PC-9 (cell line): ENCODE measurements at regions of chr16 and their contacts with region 1.

Region 1: GRCh38 chr16:71288890-71289733 is at the start of gene CMTR2:
- DNase-seq: peak; percentile 95 to 97
- H3K4me3 ChIP-seq: peak within 1 kb of the TSS; percentile 67
- H3K27ac ChIP-seq: peak within 1 kb of the TSS; percentile 93
- H3K4me1 ChIP-seq: peaks cover 35% of the 10 kb centered on the region
- H3K27me3 ChIP-seq: no peaks in the 10 kb centered on the region
- CTCF ChIP-seq: no peak
- total RNA-seq, gene CMTR2: 30.4 and 36.2 TPM in 2 replicates

Region 2: DNA sequence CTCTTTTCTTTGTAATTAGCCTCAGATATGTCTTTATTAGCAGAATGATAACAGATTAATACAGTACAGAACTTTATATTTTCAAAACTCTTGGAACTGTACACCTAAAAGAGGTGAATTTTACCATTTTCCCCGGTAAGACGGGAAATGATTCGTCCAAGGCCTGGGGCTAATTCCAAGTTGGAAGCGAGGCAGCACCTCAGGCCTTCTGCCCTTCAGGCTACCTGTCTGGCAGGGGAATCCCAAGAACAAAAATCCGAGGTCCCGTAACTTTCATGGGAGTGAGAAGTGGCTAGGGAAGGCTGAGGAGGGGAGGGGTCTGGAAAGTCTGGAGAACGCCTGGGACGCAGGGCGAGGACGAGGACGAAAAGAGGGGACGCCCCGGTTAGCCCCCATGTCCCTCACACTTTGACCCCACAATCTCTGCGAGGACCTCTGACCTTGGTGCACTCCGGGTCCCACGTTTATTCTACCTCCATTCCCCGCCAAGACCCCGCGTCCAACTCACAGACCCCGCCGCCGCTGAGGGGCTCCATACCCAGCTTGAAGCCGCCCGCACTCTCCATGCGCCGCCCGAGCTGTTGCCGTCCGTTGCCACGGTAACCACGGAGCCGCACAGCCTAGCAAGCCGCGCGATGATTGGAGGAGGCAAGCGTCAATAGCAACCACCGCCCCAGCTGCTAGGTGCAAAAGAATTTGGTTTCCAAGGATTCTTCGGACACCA is 58.8 kb before region 1 on chr16 and contains the start of gene HYDIN:
- CTCF ChIA-PET with region 1: no interaction called
- POLR2A ChIA-PET with region 1: interaction called, 3 read pairs
- intact Hi-C with region 1: loop called (anchors 5 kb)
- DNase-seq: peak; percentile 83 to 90
- H3K4me3 ChIP-seq: peak within 1 kb of the TSS; percentile 81
- H3K27ac ChIP-seq: no peak within 1 kb of the TSS
- H3K4me1 ChIP-seq: peaks cover 6% of the 10 kb centered on the region
- H3K27me3 ChIP-seq: no peaks in the 10 kb centered on the region
- CTCF ChIP-seq: no peak
- total RNA-seq, gene HYDIN: 25.9 and 31.0 TPM in 2 replicates

Region 3: DNA sequence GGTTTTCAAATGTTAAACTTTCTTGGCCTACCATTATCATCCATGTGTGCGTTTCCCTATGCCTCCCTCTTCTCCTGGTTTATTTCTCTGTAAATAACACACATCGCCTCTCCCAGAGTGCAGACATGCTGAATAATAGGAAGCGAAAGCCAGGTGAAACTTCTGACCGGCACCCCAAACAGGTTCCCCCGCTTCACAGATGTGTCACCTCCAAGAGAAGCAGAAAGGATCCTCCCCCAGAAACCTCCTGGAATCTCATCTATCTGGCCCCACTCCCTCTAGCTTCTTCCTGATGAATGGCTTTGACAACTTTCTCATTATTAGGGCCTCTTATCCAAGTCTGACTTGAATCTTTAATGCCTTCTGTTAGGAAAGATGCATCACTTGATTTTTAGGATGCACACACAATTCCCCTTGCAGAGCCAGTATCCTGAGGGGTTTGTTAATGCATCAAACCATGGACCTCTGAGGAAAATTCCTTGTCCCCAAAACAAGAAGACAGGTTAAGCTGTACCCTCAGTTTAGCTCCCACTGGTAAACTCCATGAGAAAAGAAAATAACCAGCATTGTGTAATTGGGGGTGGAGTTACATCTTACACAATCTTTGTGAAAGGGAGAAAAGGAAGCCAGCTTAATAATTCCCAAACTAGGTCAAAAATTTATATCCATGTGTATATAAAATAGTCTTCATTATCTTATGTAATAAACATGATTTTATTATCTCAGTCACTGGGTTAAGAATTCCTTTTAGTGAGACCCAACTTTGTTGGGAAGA is 38.5 kb before region 1 on chr16:
- CTCF ChIA-PET with region 1: no interaction called
- POLR2A ChIA-PET with region 1: no interaction called
- intact Hi-C with region 1: loop called (anchors 2 kb)
- DNase-seq: peak; percentile 76 to 88
- H3K4me3 ChIP-seq: no peak overlapping the region; the same call in 1 of the 2 replicates
- H3K27ac ChIP-seq: peak overlapping the region; percentile 79
- H3K4me1 ChIP-seq: peaks cover 23% of the 10 kb centered on the region
- H3K27me3 ChIP-seq: no peaks in the 10 kb centered on the region
- CTCF ChIP-seq: 0 out of 2 replicates have a peak, but pooled peaks have one; percentile 32

Region 4: DNA sequence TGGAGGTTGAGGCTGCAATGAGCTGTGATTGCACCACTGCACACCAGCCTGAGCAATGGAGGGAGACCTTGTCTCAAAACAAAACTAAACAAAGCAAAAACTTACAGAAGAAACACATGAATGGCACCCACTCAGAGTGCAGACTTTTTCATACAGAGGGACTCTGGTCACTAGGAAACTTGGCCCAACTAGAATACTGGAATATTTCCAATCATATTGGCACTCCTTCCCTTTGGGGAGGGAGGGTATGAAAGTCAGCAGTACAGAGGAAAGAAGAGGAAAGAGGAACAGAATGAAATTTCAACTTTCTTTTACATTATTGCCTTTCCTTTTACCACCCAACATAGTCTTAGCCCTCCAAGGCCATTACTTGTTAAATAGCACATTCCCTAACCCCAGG is 28.1 kb before region 1 on chr16:
- CTCF ChIA-PET with region 1: no interaction called
- POLR2A ChIA-PET with region 1: no interaction called
- intact Hi-C with region 1: no loop called
- DNase-seq: no peak
- H3K4me3 ChIP-seq: no peak overlapping the region
- H3K27ac ChIP-seq: no peak overlapping the region
- H3K4me1 ChIP-seq: no peaks in the 10 kb centered on the region
- H3K27me3 ChIP-seq: no peaks in the 10 kb centered on the region
- CTCF ChIP-seq: no peak

Region 5: DNA sequence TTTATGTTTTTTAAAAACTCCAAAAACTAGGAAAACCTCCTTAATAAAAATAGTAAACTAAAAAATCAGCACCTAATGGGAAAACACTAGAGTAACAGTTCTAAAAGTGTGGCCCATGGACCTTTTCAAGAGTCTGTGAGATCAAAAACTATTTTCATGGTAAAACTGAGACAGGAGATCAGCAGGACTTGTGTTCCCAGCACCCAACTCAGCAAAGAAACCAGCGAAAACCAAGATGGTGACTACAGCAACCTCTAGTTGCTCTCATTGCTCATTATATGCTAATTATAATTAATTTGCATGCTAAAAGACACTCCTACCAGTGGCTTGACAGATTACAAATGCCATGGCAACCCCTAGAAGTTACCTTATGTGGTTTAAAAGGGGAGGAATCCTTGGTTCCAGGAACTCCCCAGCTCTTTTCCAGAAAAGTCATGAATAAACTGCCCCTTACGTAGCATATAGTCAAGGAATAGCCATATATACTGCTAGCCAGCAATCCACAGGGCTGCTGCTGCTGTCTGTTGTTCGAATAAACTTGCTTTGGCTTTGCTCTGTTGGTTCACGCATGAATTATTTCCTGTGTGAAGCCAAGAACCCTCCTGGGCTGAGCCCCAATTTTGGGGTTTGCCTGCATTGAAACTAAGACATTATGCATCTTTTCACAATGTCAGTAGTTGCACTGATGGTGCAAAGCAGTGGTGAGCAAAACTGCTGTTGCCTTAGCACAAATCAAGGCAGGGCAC is 12.3 kb before region 1 on chr16:
- CTCF ChIA-PET with region 1: interaction called, 3 read pairs
- POLR2A ChIA-PET with region 1: interaction called, 11 read pairs
- intact Hi-C with region 1: no loop called
- DNase-seq: no peak
- H3K4me3 ChIP-seq: no peak overlapping the region
- H3K27ac ChIP-seq: no peak overlapping the region
- H3K4me1 ChIP-seq: no peaks in the 10 kb centered on the region
- H3K27me3 ChIP-seq: no peaks in the 10 kb centered on the region
- CTCF ChIP-seq: no peak

Region 6: DNA sequence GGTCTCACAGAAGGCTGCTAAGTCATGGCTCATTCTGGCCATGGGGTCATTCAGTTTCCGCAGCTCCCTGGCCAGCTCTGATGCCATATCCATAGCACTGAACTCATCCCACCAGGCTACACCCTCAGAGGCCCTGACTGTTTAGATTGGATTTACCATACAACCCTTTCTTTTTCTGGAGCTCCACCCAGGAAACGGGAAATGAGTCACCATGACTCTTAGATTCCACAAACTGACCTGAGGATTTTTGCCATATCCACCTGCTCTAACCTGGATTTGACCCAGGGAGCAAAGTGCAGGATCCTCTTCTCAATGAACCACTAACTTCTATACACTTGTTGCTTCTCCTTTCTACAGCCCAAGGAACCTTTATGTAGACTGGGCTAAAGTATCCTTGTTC is 49.1 kb after region 1 on chr16:
- CTCF ChIA-PET with region 1: interaction called, 3 read pairs
- POLR2A ChIA-PET with region 1: interaction called, 9 read pairs
- intact Hi-C with region 1: loop called (anchors 1 kb)
- DNase-seq: peak; percentile 82 to 98
- H3K4me3 ChIP-seq: no peak overlapping the region
- H3K27ac ChIP-seq: peak overlapping the region; percentile 100
- H3K4me1 ChIP-seq: peaks cover 47% of the 10 kb centered on the region
- H3K27me3 ChIP-seq: no peaks in the 10 kb centered on the region
- CTCF ChIP-seq: no peak